ENCODE measurements at regions of chr1 and their contacts with region 1.

Region 1: DNA sequence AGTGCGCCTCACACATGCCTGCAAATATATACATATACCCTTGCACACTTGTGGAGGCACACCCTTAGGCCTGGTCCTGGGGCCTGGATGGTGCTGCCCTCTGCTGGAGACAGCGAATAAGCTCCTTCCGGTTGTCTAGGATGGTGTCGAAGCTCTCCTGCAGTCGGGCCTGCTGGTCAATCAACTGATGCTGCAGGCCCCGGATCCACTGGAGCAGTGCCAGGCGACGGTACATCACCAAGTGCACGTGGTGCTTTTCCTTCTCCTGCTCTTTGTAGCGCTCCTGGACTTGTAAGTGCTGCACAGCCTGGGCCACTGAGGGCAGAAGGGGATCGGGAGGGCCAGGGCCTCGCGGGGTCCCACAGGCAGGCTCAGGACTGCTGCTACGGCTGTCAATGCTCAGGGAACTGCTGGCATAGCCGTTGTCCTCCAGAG is 3.1 kb downstream of the C1orf216 start:
- DNase-seq: peak; percentile 69
- ATAC-seq: peak; percentile 30
- H3K4me3 ChIP-seq: no peak overlapping the region
- H3K27ac ChIP-seq: no peak overlapping the region
- H3K4me1 ChIP-seq: peaks cover 9% of the 10 kb centered on the region
- H3K27me3 ChIP-seq: no peaks in the 10 kb centered on the region
- CTCF ChIP-seq: peak; percentile 75
- POLR2A ChIP-seq: no peak
- RAD21 ChIP-seq: peak; percentile 71

Region 2: GRCh38 chr1:35377555-35377954 is 338.0 kb before region 1 on chr1:
- CTCF ChIA-PET with region 1: no interaction called
- POLR2A ChIA-PET with region 1: no interaction called
- dilution Hi-C with region 1: no loop called
- in situ Hi-C with region 1: no loop called
- intact Hi-C with region 1: no loop called
- DNase-seq: peak; percentile 68
- ATAC-seq: peak; percentile 68
- H3K4me3 ChIP-seq: no peak overlapping the region
- H3K27ac ChIP-seq: no peak overlapping the region
- H3K4me1 ChIP-seq: no peaks in the 10 kb centered on the region
- H3K27me3 ChIP-seq: no peaks in the 10 kb centered on the region
- CTCF ChIP-seq: no peak
- POLR2A ChIP-seq: no peak
- RAD21 ChIP-seq: no peak

Region 3: DNA sequence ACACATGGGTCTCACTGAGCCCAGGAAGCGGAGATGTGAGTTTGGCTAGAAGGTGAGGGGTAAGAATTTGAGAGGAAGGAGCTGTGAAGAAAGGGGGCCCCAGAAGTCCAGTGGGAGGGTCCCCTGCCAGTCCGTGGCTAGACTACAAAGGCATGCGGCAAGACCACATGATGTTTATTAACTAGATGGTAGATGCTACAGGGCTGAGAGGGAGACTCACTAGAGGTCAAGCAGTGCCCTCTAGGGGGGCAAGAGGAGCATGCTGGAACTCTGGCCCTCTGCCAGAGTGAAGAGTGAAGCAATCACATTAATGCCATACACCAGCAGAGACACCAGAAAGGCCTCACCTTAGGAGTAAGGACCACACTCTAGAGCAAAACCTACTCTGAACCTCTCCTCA is 170.6 kb before region 1 on chr1:
- CTCF ChIA-PET with region 1: no interaction called
- POLR2A ChIA-PET with region 1: no interaction called
- dilution Hi-C with region 1: no loop called
- in situ Hi-C with region 1: no loop called
- intact Hi-C with region 1: no loop called
- DNase-seq: peak; percentile 45
- ATAC-seq: peak; percentile 80
- H3K4me3 ChIP-seq: no peak overlapping the region
- H3K27ac ChIP-seq: no peak overlapping the region
- H3K4me1 ChIP-seq: peaks cover 13% of the 10 kb centered on the region
- H3K27me3 ChIP-seq: no peaks in the 10 kb centered on the region
- CTCF ChIP-seq: peak; percentile 33
- POLR2A ChIP-seq: no peak
- RAD21 ChIP-seq: peak; percentile 25; the same call in 1 of the 2 replicates

Region 4: GRCh38 chr1:35641233-35641866 is 74.2 kb before region 1 on chr1 and contains the start of gene PSMB2:
- CTCF ChIA-PET with region 1: no interaction called
- POLR2A ChIA-PET with region 1: no interaction called
- dilution Hi-C with region 1: no loop called
- in situ Hi-C with region 1: loop called (anchors 5 kb)
- intact Hi-C with region 1: loop called (anchors 5 kb)
- DNase-seq: peak; percentile 94
- ATAC-seq: peak; percentile 94
- H3K4me3 ChIP-seq: peak within 1 kb of the TSS; percentile 90
- H3K27ac ChIP-seq: peak within 1 kb of the TSS; percentile 86
- H3K4me1 ChIP-seq: no peaks in the 10 kb centered on the region
- H3K27me3 ChIP-seq: peaks cover 11% of the 10 kb centered on the region
- CTCF ChIP-seq: no peak
- POLR2A ChIP-seq: peak; percentile 83
- RAD21 ChIP-seq: no peak
- total RNA-seq, gene PSMB2: 23.8 and 28.1 TPM in 2 replicates

Region 5: GRCh38 chr1:35702508-35702907 is 13.1 kb before region 1 on chr1:
- CTCF ChIA-PET with region 1: interaction called, 17 read pairs
- POLR2A ChIA-PET with region 1: interaction called, 6 read pairs
- dilution Hi-C with region 1: no loop called
- in situ Hi-C with region 1: no loop called
- intact Hi-C with region 1: no loop called
- DNase-seq: no peak
- ATAC-seq: no peak
- H3K4me3 ChIP-seq: no peak overlapping the region
- H3K27ac ChIP-seq: no peak overlapping the region
- H3K4me1 ChIP-seq: no peaks in the 10 kb centered on the region
- H3K27me3 ChIP-seq: peaks cover 48% of the 10 kb centered on the region
- CTCF ChIP-seq: no peak
- POLR2A ChIP-seq: no peak
- RAD21 ChIP-seq: no peak

Region 6: GRCh38 chr1:35763201-35763600 is 47.6 kb after region 1 on chr1:
- CTCF ChIA-PET with region 1: no interaction called
- POLR2A ChIA-PET with region 1: no interaction called
- dilution Hi-C with region 1: no loop called
- in situ Hi-C with region 1: no loop called
- intact Hi-C with region 1: no loop called
- DNase-seq: peak; percentile 3
- ATAC-seq: no peak
- H3K4me3 ChIP-seq: no peak overlapping the region
- H3K27ac ChIP-seq: no peak overlapping the region
- H3K4me1 ChIP-seq: no peaks in the 10 kb centered on the region
- H3K27me3 ChIP-seq: no peaks in the 10 kb centered on the region
- CTCF ChIP-seq: no peak
- POLR2A ChIP-seq: no peak
- RAD21 ChIP-seq: no peak